Kidney (tissue), 22 donors: ENCODE measurements at regions of chr7 and their contacts with region 1.

Region 1: GRCh38 chr7:4753711-4754432 is 21.6 kb upstream of the AP5Z1 start:
- DNase-seq: peak; percentile 79 to 90 (median 81)
- H3K4me3 ChIP-seq: no peak overlapping the region
- H3K27ac ChIP-seq: no peak overlapping the region
- H3K4me1 ChIP-seq: peaks cover 0 to 5% (median 0%) of the 10 kb centered on the region in 3 donors
- H3K27me3 ChIP-seq: no peaks in the 10 kb centered on the region
- CTCF ChIP-seq: peak; percentile 89

Region 2: DNA sequence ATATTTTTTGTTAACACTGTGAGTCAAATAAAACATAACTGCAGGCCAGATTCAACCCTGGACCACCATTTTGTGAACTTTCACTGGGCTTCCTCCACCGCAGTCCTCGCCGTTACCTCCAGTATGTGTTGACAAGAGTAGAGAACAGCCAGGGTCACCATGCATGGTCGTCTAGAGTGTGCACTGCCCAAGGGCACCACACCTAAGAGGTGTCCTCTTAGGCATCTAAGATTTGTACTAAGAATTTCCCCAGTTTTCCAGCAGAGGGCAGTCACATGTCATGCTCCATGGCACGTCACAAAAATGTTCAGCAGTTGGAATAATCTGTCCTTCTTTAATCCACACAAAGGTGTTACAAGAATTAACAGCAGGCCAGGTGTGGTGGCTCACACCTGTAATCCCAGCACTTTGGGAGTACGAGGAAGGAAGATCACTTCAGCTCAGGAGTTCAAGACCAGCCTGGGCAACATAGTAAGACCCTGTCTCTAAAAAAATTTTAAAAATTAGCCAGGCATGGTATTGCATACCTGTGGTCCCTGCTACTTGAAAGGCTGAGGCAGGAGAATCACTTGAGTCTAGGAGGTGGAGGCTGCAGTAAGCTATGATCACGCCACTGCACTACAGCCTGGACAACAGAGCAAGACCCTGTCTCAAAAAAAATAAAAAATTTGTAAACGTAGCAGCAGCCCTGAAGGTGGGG is 143.0 kb before region 1 on chr7:
- intact Hi-C with region 1: loop called (anchors 10 kb)
- DNase-seq: peak; percentile 48 to 80 (median 51)
- H3K4me3 ChIP-seq: no peak overlapping the region
- H3K27ac ChIP-seq: no peak overlapping the region
- H3K4me1 ChIP-seq: peaks cover 0 to 5% (median 0%) of the 10 kb centered on the region in 3 donors
- H3K27me3 ChIP-seq: no peaks in the 10 kb centered on the region
- CTCF ChIP-seq: peak; percentile 86